ENCODE measurements at regions of chr9 and their contacts with region 1.

Region 1: GRCh38 chr9:114738581-114739316 is 56.8 kb upstream of the TEX48 start:
- DNase-seq: peak; percentile 89
- H3K4me3 ChIP-seq: no peak overlapping the region
- H3K27ac ChIP-seq: peak overlapping the region; percentile 23
- H3K4me1 ChIP-seq: peaks cover 4% of the 10 kb centered on the region
- H3K27me3 ChIP-seq: no peaks in the 10 kb centered on the region
- CTCF ChIP-seq: peak; percentile 69 to 90
- POLR2A ChIP-seq: no peak

Region 2: DNA sequence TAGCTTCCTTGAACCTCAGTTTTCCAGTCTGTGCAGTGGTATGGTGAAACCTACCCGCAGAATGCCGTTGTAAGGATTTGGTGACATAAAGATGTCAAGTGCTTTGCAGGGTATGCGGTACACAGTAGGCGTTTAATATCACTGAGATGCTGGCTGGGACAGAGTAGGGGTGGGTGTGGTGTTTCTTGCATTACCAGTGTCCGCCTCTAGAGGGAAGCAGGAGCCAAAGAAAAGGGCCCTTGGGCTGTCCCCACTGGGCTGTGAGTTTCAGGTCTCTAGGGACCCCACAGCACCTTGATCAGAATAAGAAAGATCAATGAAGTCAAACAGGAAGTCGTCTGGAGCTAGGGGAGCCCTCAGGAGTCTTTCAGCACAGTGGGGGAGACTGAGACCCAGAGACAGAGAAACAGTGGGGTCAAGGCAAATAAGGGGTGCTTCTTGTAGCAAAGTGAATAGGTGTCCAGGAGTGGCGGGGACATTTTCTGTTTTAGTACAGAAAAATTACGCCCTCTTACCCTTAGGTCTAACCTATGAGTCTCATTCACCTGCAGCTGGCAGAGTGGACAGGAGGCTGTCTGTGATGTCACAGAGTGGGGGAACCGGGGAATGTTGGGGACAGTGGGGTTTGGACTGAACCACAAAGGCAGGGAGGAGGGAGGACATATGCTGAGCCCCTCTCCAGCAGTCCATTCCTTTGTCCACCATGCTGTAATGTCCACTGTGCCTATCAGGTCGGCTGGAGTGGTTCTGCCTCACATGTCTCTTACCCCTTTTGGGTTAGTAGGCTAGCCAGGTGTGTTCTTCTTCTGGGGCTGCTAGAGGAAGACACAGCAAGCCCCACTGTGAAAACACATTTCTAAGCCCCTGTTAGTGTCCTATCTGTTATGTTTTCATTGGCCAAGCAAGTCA is 76.4 kb before region 1 on chr9:
- CTCF ChIA-PET with region 1: interaction called, 3 read pairs
- POLR2A ChIA-PET with region 1: no interaction called
- dilution Hi-C with region 1: no loop called
- intact Hi-C with region 1: loop called (anchors 1 kb)
- DNase-seq: peak; percentile 50
- H3K4me3 ChIP-seq: no peak overlapping the region
- H3K27ac ChIP-seq: no peak overlapping the region
- H3K4me1 ChIP-seq: no peaks in the 10 kb centered on the region
- H3K27me3 ChIP-seq: peaks cover 5 to 9% of the 10 kb centered on the region in 2 experiments
- CTCF ChIP-seq: peak; percentile 79 to 80
- POLR2A ChIP-seq: no peak

Region 3: DNA sequence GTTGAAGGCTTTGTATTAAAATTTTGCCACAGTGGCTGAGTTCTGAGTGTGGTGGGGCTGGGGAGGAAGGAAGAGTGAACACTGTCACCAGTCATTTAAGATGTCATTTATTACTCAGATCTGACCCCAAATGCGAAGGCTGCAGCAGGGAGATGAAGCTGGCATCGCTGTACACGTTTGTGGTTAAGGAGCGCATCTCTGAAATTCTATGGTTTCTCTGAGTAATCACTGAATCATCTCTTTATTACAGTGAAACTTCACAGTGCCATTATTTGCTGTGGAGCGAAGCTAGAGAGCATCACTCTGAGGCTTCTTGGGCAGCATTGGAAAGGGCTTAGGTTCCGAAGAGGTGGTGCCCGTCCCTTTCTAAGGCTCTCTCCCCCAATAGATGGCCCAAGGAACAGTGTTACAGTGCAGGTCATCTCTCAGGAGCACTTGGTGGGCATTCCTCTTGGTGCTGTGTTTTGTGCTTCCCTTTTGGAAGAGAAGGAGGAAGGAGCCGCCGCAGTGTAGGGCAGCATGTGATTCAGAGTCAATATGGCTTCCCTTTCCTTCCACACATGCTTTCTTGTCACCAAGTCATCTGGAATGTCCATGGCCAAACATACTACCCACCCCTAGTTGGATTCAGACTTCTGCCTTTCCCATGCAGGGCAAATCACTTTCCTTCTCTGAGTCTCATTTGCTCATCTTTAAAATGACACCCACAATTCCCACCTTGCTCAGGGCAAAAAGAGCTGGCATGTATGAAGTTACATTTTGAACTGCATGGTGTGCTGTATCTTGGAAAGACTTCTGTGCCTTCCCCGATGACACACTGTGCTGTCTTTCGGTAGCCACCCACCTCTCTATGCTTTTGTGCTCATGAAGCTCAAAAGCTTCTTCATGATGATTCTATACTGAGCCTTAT is 47.4 kb before region 1 on chr9:
- CTCF ChIA-PET with region 1: no interaction called
- POLR2A ChIA-PET with region 1: no interaction called
- dilution Hi-C with region 1: no loop called
- intact Hi-C with region 1: loop called (anchors 2 kb)
- DNase-seq: peak; percentile 23
- H3K4me3 ChIP-seq: no peak overlapping the region
- H3K27ac ChIP-seq: no peak overlapping the region
- H3K4me1 ChIP-seq: peaks cover 12% of the 10 kb centered on the region
- H3K27me3 ChIP-seq: no peaks in the 10 kb centered on the region
- CTCF ChIP-seq: no peak
- POLR2A ChIP-seq: no peak

Region 4: DNA sequence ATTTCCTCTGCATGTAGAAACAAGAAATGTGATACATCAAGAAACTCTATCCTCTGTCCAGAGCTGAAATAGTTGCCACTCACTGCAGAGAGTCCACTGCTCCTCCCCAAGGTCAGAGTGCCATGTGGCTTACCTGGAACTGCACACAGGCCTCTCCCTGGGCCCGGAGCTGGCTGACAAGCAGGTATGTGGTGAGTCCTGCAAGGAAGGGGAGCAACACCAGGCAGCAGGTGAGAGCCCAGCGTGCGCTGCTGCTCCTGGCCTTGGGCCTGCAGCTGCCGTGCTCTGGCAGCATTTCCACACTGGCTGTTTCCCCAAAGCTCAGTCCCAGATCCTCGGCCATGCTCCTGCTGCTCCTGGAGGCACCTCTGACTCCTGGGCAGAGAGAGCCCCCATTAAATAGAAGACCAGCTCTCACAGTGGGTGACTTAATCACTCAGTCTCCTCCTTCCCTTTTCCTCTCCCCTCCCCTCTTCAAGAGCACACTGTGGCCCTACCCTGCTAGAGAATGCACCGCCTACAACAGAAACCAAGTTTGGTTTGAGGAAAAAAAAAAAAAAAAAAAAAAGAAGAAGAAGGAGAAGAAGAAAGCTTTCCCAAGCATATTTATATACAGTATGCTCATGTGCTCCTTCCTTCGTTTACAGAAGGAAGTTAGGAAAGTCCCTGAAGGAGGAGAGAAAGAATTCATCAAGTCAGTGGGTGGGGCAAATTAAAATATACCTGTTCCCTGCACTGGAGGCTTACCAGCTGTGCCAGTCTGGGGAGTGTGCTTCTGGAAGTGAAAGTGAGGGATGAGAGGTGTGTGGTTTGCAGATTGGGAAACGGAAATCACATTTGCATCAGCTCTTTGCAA is 67.1 kb after region 1 on chr9 and contains the start of gene TNFSF15:
- CTCF ChIA-PET with region 1: interaction called, 3 read pairs
- POLR2A ChIA-PET with region 1: no interaction called
- dilution Hi-C with region 1: no loop called
- intact Hi-C with region 1: loop called (anchors 1 kb)
- DNase-seq: peak; percentile 68
- H3K4me3 ChIP-seq: peak within 1 kb of the TSS; percentile 28 to 57 (median 33)
- H3K27ac ChIP-seq: peak within 1 kb of the TSS; percentile 64
- H3K4me1 ChIP-seq: peaks cover 38% of the 10 kb centered on the region
- H3K27me3 ChIP-seq: no peaks in the 10 kb centered on the region
- CTCF ChIP-seq: no peak
- POLR2A ChIP-seq: peak; percentile 54
- total RNA-seq, gene TNFSF15: 13.6 and 14.3 TPM in 2 replicates

Region 5: DNA sequence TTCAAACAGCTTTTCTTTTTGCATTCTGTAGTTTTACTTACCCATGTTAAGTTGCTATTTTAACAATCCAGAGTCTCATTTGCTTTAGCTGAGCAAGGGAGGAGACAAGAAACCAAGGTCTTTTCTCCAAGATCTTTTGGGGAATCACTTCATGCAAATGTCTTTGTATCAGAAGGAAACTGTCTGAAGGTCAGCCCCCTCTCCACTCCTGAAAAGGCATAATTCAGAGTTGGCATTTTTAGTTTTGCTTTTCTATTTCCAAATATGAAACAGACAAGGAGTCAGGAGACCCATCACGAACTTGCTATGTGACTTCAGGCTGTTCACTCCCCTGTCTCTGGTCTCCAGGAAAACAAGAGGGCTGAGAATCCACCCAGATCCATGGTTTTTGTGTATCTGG is 79.4 kb after region 1 on chr9:
- CTCF ChIA-PET with region 1: no interaction called
- POLR2A ChIA-PET with region 1: no interaction called
- dilution Hi-C with region 1: no loop called
- intact Hi-C with region 1: no loop called
- DNase-seq: no peak
- H3K4me3 ChIP-seq: no peak overlapping the region
- H3K27ac ChIP-seq: no peak overlapping the region
- H3K4me1 ChIP-seq: no peaks in the 10 kb centered on the region
- H3K27me3 ChIP-seq: no peaks in the 10 kb centered on the region
- CTCF ChIP-seq: no peak
- POLR2A ChIP-seq: no peak

Region 6: GRCh38 chr9:115013998-115014397 is 275.2 kb after region 1 on chr9:
- CTCF ChIA-PET with region 1: interaction called, 7 read pairs
- POLR2A ChIA-PET with region 1: no interaction called
- dilution Hi-C with region 1: no loop called
- intact Hi-C with region 1: loop called (anchors 1 kb)
- DNase-seq: peak; percentile 47
- H3K4me3 ChIP-seq: no peak overlapping the region
- H3K27ac ChIP-seq: no peak overlapping the region
- H3K4me1 ChIP-seq: no peaks in the 10 kb centered on the region
- H3K27me3 ChIP-seq: peaks cover 3 to 5% of the 10 kb centered on the region in 2 experiments
- CTCF ChIP-seq: peak; percentile 62 to 72
- POLR2A ChIP-seq: no peak

Measured in endothelial cell of umbilical vein (primary cell).